Mucosa of descending colon (tissue), 3 donors: ENCODE measurements at regions of chr1 and their contacts with region 1.

Region 1: DNA sequence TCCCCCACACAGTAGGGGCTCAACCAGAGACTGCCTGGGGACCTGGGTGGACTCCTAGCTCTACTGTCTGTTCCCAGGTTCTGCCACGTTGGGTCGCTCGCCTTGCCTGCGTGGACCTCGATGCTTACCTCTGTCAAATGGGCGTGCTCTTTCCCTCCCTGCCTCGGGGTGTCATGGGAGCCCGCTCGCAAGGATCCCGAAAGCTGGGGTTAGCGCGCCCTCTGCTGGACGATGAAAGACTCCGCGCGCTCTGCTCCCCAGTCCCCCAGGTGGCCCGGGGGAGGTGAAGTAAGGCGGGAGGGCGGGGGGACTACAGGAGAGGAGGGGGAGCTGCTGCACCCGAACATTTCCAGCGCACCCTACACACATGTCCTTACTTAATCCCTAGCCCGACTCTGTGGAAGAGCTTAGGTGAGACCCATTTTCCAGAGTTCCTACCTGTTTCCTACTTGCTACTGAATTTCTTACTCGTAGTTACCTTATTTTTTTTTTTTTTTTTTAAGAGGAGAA is 2.3 kb upstream of the BSND start:
- DNase-seq: peak; percentile 76 to 85 (median 82)
- ATAC-seq: peak; percentile 90
- H3K4me3 ChIP-seq: no peak overlapping the region
- H3K4me1 ChIP-seq: peaks cover 3% of the 10 kb centered on the region
- CTCF ChIP-seq: peak; percentile 60

Region 2: GRCh38 chr1:54950369-54951163 is 45.8 kb before region 1 on chr1:
- intact Hi-C with region 1: loop called (anchors 2 to 5 kb)
- DNase-seq: peak; percentile 61 to 91 (median 61)
- ATAC-seq: peak; percentile 85
- H3K4me3 ChIP-seq: no peak overlapping the region
- H3K4me1 ChIP-seq: peaks cover 11% of the 10 kb centered on the region
- CTCF ChIP-seq: peak; percentile 56